Heart right ventricle (tissue), 16 donors: ENCODE measurements at regions of chr6 and their contacts with region 1.

Region 1: DNA sequence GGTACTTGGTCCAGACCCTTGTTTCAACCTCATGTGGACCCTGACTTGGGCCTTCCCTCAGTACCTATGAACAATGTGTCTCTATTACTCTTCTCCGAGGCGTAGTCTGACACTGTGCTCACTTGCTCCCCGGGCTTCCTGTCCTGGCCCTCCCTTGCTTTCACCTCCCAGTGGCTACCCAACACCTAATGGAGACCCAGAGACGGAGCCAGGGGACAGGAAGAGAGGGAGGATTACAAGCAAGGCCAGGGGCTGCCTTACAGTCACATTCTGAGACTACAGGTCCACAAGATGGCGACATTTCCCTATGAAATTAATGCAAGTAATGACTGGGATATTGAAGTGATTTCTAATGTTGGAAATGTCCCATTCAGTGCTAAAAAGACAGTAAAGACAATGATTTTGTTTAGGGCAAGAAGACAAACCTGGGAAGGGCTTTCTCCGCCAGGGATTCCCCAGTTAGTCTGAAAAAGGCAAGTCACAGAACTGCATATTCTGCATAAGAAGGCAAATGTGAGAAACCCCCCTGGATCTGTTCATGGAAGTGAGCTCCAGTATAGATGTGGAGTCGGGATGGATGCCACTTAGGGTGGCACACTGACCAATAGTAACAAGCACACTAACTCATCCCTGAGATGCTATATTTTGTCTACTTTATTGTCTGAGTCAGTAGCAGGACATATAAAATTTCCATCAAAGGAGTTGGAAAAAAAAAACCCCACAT is 44.0 kb upstream of the ZBTB24 start:
- DNase-seq: peak in 1 of 2 donors; percentile 37
- ATAC-seq: peak in 6 of 8 donors; percentile 29 to 72 (median 55)
- H3K4me3 ChIP-seq: no peak overlapping the region
- H3K27ac ChIP-seq: no peak overlapping the region
- H3K4me1 ChIP-seq: no peaks in the 10 kb centered on the region
- H3K27me3 ChIP-seq: no peaks in the 10 kb centered on the region
- CTCF ChIP-seq: peak in 8 of 9 donors; percentile 44 to 71 (median 58)

Region 2: DNA sequence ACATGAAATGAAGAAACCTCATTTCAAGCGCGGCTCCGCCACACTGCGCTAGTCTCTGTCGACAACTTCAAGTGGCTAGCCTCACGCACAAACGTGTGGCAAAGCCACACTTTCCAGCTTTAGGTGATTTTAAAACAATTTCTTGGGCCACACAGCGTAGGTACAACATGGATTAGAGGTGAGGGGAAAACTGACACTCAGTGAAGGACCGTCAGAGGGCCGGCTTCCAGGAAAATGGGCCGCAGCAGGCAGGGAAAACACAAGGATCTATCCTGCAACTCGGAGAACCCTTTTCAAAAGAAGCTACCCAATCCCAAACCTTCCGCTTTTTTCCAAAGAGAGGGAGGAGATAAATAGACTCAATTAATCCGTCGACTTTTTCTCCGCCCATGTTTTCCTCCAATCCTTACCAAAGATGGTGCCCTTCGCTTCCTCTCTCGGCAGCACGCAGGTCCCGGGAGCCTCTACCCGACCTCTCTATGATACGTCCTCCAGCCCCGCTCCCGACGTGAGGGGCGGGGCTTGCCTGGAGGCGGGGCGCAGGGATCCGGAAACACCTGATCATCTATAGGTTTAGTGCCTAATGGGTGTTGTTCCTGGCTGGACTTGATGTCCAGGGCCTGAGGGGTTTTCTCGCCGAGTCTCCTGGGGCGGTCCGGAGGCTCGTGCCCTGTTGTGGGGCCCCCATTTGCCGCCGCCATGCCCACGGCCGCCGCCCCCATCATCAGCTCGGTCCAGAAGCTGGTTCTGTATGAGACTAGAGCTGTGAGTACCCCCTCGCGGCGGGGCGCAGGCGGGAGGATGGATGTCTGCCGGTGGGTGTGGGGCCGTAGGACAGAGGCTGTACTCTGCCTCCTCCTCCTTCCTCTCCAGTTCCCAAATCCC is 163.9 kb after region 1 on chr6 and contains the starts of genes AK9 and FIG4:
- intact Hi-C with region 1: loop called in 3 of 10 experiments (anchors 5 to 10 kb)
- DNase-seq: peak; percentile 90 to 93
- ATAC-seq: peak; percentile 99 to 100 (median 100)
- H3K4me3 ChIP-seq: peak within 1 kb of the TSS; percentile 64 to 87 (median 78)
- H3K27ac ChIP-seq: peak within 1 kb of the TSS; percentile 34 to 93 (median 84)
- H3K4me1 ChIP-seq: peaks cover 0 to 28% (median 17%) of the 10 kb centered on the region in 9 donors
- H3K27me3 ChIP-seq: no peaks in the 10 kb centered on the region
- CTCF ChIP-seq: peak in 6 of 9 donors; percentile 16 to 53 (median 34)
- total RNA-seq, gene AK9: 6.8 to 17.0 (median 10.9) TPM
- total RNA-seq, gene FIG4: 7.6 to 13.1 (median 9.3) TPM

Region 3: GRCh38 chr6:110039364-110039980 is 512.4 kb after region 1 on chr6:
- intact Hi-C with region 1: loop called in 7 of 10 experiments (anchors 5 to 10 kb)
- DNase-seq: peak; percentile 82 to 83
- ATAC-seq: peak; percentile 84 to 95 (median 92)
- H3K4me3 ChIP-seq: peak overlapping the region in 7 of 10 donors; percentile 4 to 48 (median 28)
- H3K27ac ChIP-seq: peak overlapping the region in 1 of 10 donors; percentile 76
- H3K4me1 ChIP-seq: peaks cover 0 to 15% (median 5%) of the 10 kb centered on the region in 9 donors
- H3K27me3 ChIP-seq: peaks cover 0 to 4% (median 0%) of the 10 kb centered on the region in 7 donors
- CTCF ChIP-seq: peak; percentile 73 to 96 (median 90)

Region 4: GRCh38 chr6:110053395-110054240 is 526.6 kb after region 1 on chr6:
- intact Hi-C with region 1: loop called in 3 of 10 experiments (anchors 5 to 10 kb)
- DNase-seq: peak in 1 of 2 donors; percentile 25
- ATAC-seq: peak in 6 of 8 donors; percentile 34 to 62 (median 58)
- H3K4me3 ChIP-seq: no peak overlapping the region
- H3K27ac ChIP-seq: no peak overlapping the region
- H3K4me1 ChIP-seq: no peaks in the 10 kb centered on the region
- H3K27me3 ChIP-seq: peaks cover 0 to 16% (median 0%) of the 10 kb centered on the region in 7 donors
- CTCF ChIP-seq: peak; percentile 34 to 81 (median 74)

Region 5: DNA sequence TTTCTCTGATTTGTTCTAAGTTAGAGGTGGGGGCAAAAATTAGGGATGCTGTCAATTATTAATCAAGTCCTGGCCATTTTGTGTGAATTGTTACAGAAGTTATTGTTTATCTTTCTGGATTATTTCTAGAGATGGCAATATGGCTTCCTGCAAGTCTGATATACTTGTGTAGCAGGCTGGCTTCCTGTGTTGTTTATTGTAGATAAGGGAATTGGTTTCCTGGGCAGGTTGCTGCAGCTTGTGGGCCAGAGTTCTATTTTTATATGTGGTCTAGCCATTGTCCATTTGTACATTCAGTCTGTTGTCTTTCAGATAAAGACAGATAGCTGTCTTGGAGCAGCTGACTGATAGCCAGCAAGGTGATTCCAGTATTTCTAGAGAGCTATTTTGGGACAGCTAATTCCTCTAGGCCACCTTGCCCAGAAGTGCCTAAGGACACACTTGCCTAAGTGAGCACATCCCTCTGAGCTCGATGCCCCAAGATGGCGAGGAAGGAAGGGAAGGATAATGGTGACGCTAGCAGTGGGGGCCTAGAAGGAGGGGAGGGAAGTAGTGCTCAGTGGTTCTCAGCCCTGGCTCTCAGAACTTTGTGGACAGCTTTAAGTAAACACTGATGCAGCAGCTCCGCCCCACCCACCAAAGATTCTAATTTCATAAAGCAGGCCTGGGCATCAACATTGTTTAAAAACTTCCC is 862.8 kb after region 1 on chr6:
- intact Hi-C with region 1: loop called in 4 of 10 experiments (anchors 5 to 10 kb)
- DNase-seq: no peak
- ATAC-seq: peak in 3 of 8 donors; percentile 32 to 63 (median 40)
- H3K4me3 ChIP-seq: no peak overlapping the region
- H3K27ac ChIP-seq: peak overlapping the region in 1 of 10 donors; percentile 3
- H3K4me1 ChIP-seq: peaks cover 0 to 18% (median 7%) of the 10 kb centered on the region in 9 donors
- H3K27me3 ChIP-seq: no peaks in the 10 kb centered on the region
- CTCF ChIP-seq: no peak